AG04449 (cell line): ENCODE measurements at regions of chr2 and their contacts with region 1.

Region 1: GRCh38 chr2:182650704-182651103 is 65.4 kb upstream of the DNAJC10 start:
- DNase-seq: peak; percentile 34
- H3K4me3 ChIP-seq: no peak overlapping the region
- CTCF ChIP-seq: no peak

Region 2: DNA sequence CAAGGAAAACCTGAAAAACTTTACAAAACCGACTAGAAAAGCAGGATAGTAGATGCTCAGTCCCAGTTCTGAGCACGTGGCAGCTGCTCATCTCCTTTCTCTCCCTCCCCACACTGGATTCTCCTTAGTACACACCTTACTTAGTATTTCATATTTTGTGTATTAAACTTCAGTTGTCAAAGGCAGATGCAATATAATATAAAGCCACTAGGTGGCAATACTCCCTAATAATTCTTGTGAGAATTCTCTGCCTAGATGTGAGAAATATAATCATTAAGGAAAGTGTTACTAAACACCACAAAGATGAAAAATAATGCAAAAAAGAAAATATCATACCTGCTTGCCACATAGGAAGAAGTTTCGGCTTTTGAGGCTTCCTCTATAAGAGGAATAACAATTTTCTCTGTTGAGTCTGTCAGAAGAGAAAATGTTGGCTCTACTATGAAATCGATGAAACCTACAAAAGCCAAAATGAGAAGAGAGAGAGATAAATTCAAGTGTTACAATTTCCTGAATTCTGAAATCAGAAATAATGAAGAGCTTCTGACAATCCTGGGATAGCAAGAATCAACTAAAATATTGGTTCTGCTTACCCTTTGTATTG is 464.5 kb before region 1 on chr2:
- CTCF ChIA-PET with region 1: interaction called, 135 read pairs
- POLR2A ChIA-PET with region 1: interaction called, 3 read pairs
- DNase-seq: no peak
- H3K4me3 ChIP-seq: no peak overlapping the region
- CTCF ChIP-seq: peak; percentile 22

Region 3: DNA sequence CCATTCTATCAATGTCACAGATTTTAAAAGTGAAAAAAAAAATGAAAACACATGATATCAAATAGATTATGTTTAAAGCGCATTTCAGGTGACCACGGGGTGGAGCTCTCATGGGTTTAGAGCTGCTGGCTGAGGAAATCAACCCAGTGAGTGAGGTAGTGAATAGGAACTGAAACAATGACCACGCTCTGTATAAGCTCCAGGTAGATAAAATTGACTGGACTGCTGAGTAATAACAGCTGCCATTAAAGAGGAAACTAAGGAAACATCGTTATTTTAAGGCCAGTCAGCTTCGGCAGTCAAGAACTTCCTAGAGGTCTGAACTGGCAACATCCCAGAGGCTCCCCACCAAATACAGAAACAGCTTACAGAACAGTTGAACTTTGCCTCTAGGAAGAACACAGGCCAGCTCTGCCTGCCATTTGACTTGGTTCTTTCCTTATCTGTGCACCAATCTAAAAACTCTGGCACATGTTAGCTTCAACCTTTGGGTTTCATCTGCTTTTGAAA is 409.8 kb before region 1 on chr2:
- CTCF ChIA-PET with region 1: interaction called, 23 read pairs
- POLR2A ChIA-PET with region 1: no interaction called
- DNase-seq: no peak
- H3K4me3 ChIP-seq: no peak overlapping the region
- CTCF ChIP-seq: peak; percentile 27

Region 4: GRCh38 chr2:182318466-182319309 is 332.0 kb before region 1 on chr2:
- CTCF ChIA-PET with region 1: interaction called, 11 read pairs
- POLR2A ChIA-PET with region 1: no interaction called
- DNase-seq: no peak
- H3K4me3 ChIP-seq: no peak overlapping the region
- CTCF ChIP-seq: no peak

Region 5: DNA sequence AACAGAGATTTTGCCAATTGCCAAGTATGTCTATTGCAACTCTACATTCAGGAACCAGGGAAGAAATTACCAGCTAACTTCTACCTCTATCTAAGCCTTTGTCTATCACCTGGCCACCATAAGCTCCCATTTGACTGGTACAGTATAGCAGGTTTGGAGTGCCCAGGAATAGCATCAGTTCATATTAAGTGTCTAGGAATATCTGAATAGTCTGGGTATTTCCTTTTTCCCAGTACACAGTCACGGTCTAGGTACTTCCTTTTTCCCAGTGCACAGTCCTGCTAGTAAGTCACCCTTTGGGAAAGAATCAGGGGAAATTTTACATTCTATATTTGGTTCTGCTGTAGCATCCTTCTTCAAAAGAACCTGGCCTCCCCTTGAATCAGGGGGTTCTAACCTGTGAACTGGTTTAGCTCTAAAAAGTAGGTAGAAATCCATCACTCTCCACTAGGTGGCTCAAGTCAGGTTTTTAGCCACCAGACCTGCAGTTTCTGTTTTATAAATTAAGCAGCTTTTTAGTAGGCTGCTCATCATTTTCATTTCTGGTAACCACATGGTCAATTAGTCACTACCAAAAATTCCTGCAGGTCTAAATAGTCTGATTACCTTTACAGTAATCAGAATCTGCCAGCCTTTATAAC is 16.1 kb after region 1 on chr2:
- CTCF ChIA-PET with region 1: interaction called, 12 read pairs
- POLR2A ChIA-PET with region 1: no interaction called
- DNase-seq: no peak
- H3K4me3 ChIP-seq: no peak overlapping the region
- CTCF ChIP-seq: peak; percentile 35

Region 6: DNA sequence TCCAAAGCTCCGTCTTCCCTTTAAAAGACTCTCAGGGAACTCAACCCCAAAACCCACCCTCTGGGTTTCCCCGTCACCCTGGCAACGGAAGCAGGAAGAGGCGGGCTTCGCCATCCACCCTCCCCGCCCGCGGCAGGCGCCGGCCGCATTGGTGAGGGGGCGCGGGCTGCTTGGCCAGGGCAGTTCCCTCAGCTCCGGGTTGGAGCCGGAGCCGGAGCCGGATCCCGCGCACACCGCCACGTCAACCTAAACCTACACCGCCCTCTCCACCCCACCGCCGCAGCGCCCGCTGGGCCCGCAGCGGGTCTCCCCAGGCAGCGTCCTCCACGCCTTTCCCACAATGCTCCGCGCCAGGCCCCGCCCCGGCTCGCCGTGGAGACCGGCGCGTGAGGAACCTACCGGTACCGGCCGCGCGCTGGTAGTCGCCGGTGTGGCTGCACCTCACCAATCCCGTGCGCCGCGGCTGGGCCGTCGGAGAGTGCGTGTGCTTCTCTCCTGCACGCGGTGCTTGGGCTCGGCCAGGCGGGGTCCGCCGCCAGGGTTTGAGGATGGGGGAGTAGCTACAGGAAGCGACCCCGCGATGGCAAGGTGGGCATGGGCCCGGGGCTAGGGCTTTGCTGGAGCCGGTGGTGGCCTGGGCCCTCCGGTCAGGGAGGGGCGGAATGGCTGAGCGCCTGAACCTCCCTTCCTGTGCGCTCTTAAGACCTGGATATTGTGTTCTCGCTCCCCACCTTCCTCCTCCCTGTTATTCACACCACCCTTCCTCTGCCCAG is 65.4 kb after region 1 on chr2 and contains the start of gene DNAJC10:
- CTCF ChIA-PET with region 1: no interaction called
- POLR2A ChIA-PET with region 1: no interaction called
- DNase-seq: peak; percentile 40
- H3K4me3 ChIP-seq: peak within 1 kb of the TSS; percentile 97
- CTCF ChIP-seq: no peak